GM23248 (cell line): ENCODE measurements at regions of chr11 and their contacts with region 1.

Region 1: DNA sequence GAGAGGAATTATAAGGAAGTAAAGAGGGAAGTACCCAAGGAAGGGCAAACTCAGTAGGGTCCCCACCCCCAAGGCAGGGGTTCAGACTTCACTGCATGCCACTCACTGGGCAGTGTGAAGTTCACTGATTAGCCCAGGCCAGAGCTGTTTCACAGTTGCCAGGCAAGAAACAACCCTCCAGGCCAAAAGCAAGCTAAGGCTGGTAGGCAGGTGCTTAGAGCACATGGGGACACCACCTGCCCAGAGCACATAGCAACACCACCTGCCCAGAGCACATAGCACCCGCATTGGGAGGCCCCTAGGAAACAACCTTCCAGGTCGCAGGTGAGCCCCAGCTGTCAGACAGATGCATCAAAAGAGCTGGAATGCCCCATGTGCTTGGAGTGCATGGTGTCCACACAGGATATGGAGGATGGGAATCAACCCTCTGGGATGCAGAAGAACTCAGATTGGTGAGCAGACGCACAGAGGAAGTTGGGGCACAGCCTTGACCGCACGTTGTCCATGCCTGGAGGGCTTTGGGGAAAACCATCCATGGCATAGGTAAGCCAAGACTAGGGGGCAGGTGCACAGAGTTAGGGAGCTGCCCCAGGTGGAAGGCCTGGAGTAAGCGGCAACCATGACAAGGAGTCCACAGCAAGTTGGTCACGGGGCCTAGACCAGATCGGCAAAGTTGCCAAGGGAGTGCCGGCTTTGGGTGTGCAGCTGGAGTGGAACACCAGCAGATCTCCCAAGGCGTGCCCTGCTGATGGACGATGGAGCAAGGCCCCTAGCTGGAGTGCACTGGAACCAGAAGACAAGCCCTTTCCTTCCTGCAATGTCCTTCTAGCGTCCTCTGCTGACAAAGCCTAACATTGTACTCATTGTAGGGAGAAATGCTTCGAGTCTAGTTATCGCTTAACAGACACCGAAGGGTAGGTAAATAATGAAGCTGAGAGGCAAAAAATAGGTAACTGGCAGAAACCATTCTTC is 7.8 kb upstream of the TMEM216 start:
- DNase-seq: peak; percentile 37
- H3K4me3 ChIP-seq: no peak overlapping the region
- H3K27ac ChIP-seq: no peak overlapping the region
- H3K4me1 ChIP-seq: peaks cover 6% of the 10 kb centered on the region
- H3K27me3 ChIP-seq: no peaks in the 10 kb centered on the region

Region 2: DNA sequence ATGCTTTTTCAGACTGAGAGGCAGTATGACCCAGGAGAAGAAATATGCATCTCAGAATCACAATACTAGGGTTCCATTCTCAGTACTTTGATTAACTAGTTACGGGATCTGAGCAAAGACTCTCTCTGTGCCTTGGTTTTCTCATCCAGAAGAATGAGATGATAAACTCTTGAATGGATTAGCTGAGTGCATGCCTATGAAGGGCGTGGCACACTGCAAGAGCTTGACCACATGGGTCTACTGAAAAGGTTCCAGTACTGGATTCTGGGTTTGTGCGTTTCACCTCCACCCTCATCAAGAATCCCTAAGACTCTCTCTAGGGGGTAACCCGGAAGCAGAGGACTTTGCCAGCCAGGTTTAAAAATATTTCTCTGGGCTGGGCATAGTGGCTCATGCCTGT is 118.0 kb before region 1 on chr11:
- in situ Hi-C with region 1: loop called (anchors 10 kb)
- DNase-seq: peak; percentile 38
- H3K4me3 ChIP-seq: no peak overlapping the region
- H3K27ac ChIP-seq: no peak overlapping the region
- H3K4me1 ChIP-seq: peaks cover 10% of the 10 kb centered on the region
- H3K27me3 ChIP-seq: no peaks in the 10 kb centered on the region

Region 3: GRCh38 chr11:61336171-61336922 is 48.2 kb before region 1 on chr11:
- in situ Hi-C with region 1: loop called (anchors 5 kb)
- DNase-seq: peak; percentile 85
- H3K4me3 ChIP-seq: no peak overlapping the region
- H3K27ac ChIP-seq: no peak overlapping the region
- H3K4me1 ChIP-seq: 0 out of 2 replicates have a peak, but pooled peaks cover 5% of the 10 kb centered on the region
- H3K27me3 ChIP-seq: no peaks in the 10 kb centered on the region